ENCODE measurements at regions of chr14 and their contacts with region 1.

Region 1: DNA sequence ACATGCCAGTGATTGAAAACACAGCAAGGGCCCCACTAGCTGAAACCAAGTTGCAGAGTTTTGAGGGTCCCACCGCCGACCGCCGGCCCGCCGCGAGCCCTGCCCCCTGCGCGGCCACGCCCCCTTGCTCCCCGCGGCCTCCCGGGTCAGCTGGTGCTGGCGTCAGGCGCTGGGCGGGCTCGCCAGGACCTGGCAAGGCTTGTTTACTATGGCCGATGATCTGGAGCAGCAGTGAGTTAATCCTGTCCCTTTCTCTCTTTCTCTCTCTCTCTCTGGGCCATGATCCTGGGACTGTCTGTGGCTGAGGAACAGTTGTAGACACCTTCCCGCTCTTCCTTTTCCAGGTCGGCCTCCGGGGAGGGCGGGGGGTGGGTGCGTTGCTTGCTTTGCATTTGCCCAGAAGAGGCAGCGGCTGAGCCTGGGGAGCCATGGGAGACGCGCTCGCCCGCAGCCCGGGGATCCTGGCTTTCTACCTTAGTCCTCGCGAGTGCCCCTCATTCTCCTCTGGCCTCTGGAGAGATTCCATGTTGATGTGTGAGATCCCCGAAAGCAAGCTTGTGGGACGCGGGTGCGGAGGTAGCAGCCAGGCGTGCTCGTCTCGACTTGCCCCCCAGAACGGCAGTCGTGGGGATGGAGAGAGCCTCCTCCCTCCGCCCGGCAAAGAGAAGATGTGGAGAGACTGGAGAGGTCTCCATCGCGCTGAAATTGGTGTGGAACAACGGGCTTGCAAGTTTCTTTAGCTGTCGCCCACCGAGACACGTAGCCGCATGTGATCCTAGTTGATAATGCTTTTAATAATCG is at the start of gene ABHD4:
- DNase-seq: peak; percentile 16 to 79 (median 61)
- ATAC-seq: peak; percentile 77
- H3K4me3 ChIP-seq: peak within 1 kb of the TSS; percentile 70 to 86
- H3K4me3 Mint-ChIP-seq: peak within 1 kb of the TSS; percentile 90
- H3K27ac ChIP-seq: peak within 1 kb of the TSS; percentile 55 to 67
- H3K27ac Mint-ChIP-seq: peak within 1 kb of the TSS; percentile 88
- H3K4me1 ChIP-seq: peaks cover 22% of the 10 kb centered on the region
- H3K4me1 Mint-ChIP-seq: peaks cover 41% of the 10 kb centered on the region
- H3K27me3 ChIP-seq: no peaks in the 10 kb centered on the region
- H3K27me3 Mint-ChIP-seq: no peaks in the 10 kb centered on the region
- CTCF ChIP-seq: no peak
- total RNA-seq, gene ABHD4: 7.9 to 8.3 TPM

Region 2: DNA sequence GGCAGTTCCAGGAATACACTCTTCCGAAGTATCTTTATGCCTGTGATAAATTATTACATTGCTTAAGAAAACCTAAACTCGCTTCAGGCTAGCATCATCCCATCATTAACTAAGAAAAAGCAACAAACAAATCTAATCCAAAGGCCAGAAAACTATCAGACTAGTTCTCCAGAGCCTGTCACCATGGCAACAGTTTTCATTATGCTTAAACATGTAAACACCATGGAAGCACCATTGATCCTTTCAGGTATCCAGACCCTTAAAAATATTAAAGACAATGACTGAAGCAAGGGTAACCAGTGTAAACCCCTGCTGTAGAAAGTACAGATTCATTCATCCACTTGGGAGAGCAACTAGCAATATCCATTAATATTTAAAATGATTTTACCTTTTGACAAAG is 19.1 kb before region 1 on chr14:
- CTCF ChIA-PET with region 1: interaction called, 3 read pairs
- POLR2A ChIA-PET with region 1: no interaction called
- intact Hi-C with region 1: loop called in 1 of 2 experiments (anchors 2 kb)
- DNase-seq: peak in 1 of 9 experiments; percentile 28
- ATAC-seq: no peak
- H3K4me3 ChIP-seq: no peak overlapping the region
- H3K4me3 Mint-ChIP-seq: no peak overlapping the region
- H3K27ac ChIP-seq: no peak overlapping the region
- H3K27ac Mint-ChIP-seq: no peak overlapping the region
- H3K4me1 ChIP-seq: peaks cover 21% of the 10 kb centered on the region
- H3K4me1 Mint-ChIP-seq: peaks cover 60% of the 10 kb centered on the region
- H3K27me3 ChIP-seq: no peaks in the 10 kb centered on the region
- H3K27me3 Mint-ChIP-seq: no peaks in the 10 kb centered on the region
- CTCF ChIP-seq: no peak